ENCODE measurements at regions of chr15 and their contacts with region 1.

Region 1: GRCh38 chr15:36798366-36798765 is 218.9 kb downstream of the CDIN1 start:
- DNase-seq: no peak
- H3K4me3 ChIP-seq: peak overlapping the region in 1 of 4 donors; percentile 8
- H3K27ac ChIP-seq: peak overlapping the region in 1 of 5 donors; percentile 14
- H3K4me1 ChIP-seq: no peaks in the 10 kb centered on the region
- H3K27me3 ChIP-seq: no peaks in the 10 kb centered on the region
- CTCF ChIP-seq: no peak
- POLR2A ChIP-seq: no peak

Region 2: GRCh38 chr15:36742696-36743095 is 55.7 kb before region 1 on chr15:
- intact Hi-C with region 1: loop called in 1 of 2 experiments (anchors 10 kb)
- DNase-seq: no peak
- H3K4me3 ChIP-seq: no peak overlapping the region
- H3K27ac ChIP-seq: no peak overlapping the region
- H3K4me1 ChIP-seq: no peaks in the 10 kb centered on the region
- H3K27me3 ChIP-seq: no peaks in the 10 kb centered on the region
- CTCF ChIP-seq: no peak
- POLR2A ChIP-seq: no peak

Region 3: GRCh38 chr15:36858423-36858822 is 60.1 kb after region 1 on chr15:
- intact Hi-C with region 1: no loop called
- DNase-seq: no peak
- H3K4me3 ChIP-seq: no peak overlapping the region
- H3K27ac ChIP-seq: no peak overlapping the region
- H3K4me1 ChIP-seq: no peaks in the 10 kb centered on the region
- H3K27me3 ChIP-seq: no peaks in the 10 kb centered on the region
- CTCF ChIP-seq: no peak
- POLR2A ChIP-seq: no peak

Region 4: GRCh38 chr15:37678124-37678523 is 879.8 kb after region 1 on chr15:
- intact Hi-C with region 1: no loop called
- DNase-seq: no peak
- H3K4me3 ChIP-seq: no peak overlapping the region
- H3K27ac ChIP-seq: no peak overlapping the region
- H3K4me1 ChIP-seq: no peaks in the 10 kb centered on the region
- H3K27me3 ChIP-seq: no peaks in the 10 kb centered on the region
- CTCF ChIP-seq: no peak
- POLR2A ChIP-seq: no peak